Motor neuron (in vitro differentiated cells): ENCODE measurements at regions of chr12 and their contacts with region 1.

Region 1: GRCh38 chr12:111444925-111445725 is 39.4 kb downstream of the SH2B3 start:
- ATAC-seq: peak; percentile 6 to 85 (median 70)
- H3K4me3 ChIP-seq: no peak overlapping the region
- H3K27ac ChIP-seq: peak overlapping the region; percentile 64 to 92
- H3K4me1 ChIP-seq: peaks cover 15 to 19% of the 10 kb centered on the region in 2 donors

Region 2: DNA sequence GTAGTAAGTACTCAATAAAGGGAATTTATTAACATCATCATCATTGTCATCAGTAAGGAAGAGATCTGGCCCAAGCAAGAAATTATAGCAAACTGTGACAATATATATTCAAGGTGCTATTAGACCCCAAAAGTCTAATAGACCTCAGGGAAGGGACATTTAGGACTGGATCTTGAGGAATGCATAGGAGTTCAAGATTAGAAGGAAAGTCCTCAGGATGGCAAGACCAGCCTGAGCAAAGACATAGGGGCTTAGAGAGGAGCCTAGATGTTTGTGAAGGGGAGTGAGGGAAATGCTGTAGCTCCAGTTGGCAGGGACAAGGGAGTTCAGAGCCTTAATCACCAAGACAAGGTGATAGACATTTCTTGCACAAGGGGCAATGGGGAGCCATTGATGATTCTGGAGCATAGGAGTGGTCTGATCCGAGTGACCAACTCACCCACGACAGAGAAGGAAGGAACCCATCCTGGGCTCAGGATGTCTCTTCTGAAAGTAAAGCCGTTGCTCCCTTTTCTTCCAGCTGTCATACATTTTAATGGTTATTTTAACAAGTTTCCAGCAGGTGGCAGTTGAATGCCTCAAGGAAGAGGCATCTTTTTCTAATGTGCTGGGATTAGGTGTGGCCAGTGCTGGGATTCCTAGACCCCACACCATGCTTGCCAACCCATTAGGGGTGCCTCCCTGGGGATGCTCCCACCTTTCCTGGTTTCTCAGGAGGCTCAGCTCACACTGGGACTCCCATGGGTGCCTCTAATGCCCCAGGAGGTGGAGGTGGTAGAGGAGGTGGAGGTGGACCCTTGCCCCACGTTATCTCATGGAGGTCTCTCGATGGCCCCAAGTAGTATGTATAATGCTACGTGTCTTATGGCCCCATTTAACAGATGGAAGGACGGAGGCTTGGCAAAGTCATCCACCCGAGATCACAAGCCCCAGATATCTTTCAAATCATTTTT is 114.0 kb before region 1 on chr12:
- in situ Hi-C with region 1: loop called in 1 of 9 experiments (anchors 10 kb)
- ATAC-seq: peak in 5 of 8 experiments; percentile 50 to 86 (median 66)
- H3K4me3 ChIP-seq: no peak overlapping the region
- H3K27ac ChIP-seq: no peak overlapping the region
- H3K4me1 ChIP-seq: no peaks in the 10 kb centered on the region

Region 3: DNA sequence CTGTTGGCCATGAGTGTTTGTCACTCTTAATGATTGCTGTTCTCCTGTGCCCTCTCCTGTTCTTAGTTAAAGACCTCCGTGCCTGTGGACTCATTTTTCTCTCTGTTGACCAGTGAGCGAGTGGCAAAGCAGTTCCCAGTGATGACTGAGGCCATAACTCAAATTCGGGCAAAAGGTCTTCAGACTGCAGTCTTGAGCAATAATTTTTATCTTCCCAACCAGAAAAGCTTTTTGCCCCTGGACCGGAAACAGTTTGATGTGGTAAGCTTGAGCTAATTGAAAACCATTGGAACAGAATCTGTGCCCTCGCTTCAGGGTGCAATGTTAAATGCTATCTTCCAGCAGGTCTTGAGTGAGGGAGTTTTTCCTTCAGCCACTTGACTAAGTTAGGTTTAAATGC is 260.5 kb after region 1 on chr12:
- in situ Hi-C with region 1: no loop called
- ATAC-seq: no peak
- H3K4me3 ChIP-seq: no peak overlapping the region
- H3K27ac ChIP-seq: no peak overlapping the region
- H3K4me1 ChIP-seq: no peaks in the 10 kb centered on the region